Endothelial cell of umbilical vein (primary cell): ENCODE measurements at regions of chr2 and their contacts with region 1.

Region 1: DNA sequence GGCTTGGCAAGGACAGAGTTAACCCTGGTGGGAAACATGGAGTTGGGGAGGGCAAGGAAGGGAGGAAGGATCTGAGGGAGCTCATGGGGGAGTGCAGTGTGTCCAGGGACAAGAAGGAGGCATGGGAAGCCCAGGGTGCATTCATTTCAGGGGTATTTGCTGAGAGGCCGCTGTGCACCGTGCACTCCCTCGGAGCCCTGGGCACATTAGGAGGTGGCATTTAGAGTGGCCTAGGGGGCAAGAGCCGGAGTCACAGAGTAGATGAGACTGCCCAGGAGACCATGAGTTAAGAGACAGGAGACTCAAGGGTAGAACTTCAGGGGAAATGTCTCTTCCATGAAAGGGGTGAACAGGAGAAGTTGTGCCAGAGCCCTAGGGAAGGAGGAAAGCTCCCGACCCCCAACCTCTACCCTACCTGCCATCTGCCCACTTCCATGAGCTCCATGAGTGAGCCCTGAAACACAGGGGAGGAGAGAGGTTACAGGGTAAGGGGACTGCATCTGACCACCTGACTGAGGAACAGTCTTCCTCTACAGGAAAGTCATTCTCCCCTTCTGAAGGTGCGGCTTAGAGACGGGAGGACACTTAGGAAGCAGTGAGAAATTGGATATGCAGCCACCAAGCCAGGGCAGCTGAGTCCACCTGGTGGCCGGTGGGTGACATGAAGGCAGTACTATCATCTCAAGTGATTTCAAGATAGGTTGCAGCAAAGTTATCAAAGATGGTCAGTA is 58.5 kb upstream of the COPS8 start:
- DNase-seq: peak; percentile 86
- H3K4me3 ChIP-seq: no peak overlapping the region
- H3K27ac ChIP-seq: no peak overlapping the region
- H3K4me1 ChIP-seq: peaks cover 5% of the 10 kb centered on the region
- H3K27me3 ChIP-seq: no peaks in the 10 kb centered on the region
- CTCF ChIP-seq: peak; percentile 83 to 85
- POLR2A ChIP-seq: no peak

Region 2: GRCh38 chr2:236309669-236310029 is 717.5 kb before region 1 on chr2:
- CTCF ChIA-PET with region 1: interaction called, 3 read pairs
- POLR2A ChIA-PET with region 1: no interaction called
- dilution Hi-C with region 1: no loop called
- intact Hi-C with region 1: loop called (anchors 1 kb)
- DNase-seq: peak; percentile 39
- H3K4me3 ChIP-seq: no peak overlapping the region
- H3K27ac ChIP-seq: no peak overlapping the region
- H3K4me1 ChIP-seq: no peaks in the 10 kb centered on the region
- H3K27me3 ChIP-seq: no peaks in the 10 kb centered on the region
- CTCF ChIP-seq: peak; percentile 61 to 76
- POLR2A ChIP-seq: no peak

Region 3: GRCh38 chr2:236512902-236513435 is 514.2 kb before region 1 on chr2:
- CTCF ChIA-PET with region 1: interaction called, 24 read pairs
- POLR2A ChIA-PET with region 1: no interaction called
- dilution Hi-C with region 1: no loop called
- intact Hi-C with region 1: loop called (anchors 1 kb)
- DNase-seq: peak; percentile 42
- H3K4me3 ChIP-seq: no peak overlapping the region
- H3K27ac ChIP-seq: no peak overlapping the region
- H3K4me1 ChIP-seq: peaks cover 18% of the 10 kb centered on the region
- H3K27me3 ChIP-seq: no peaks in the 10 kb centered on the region
- CTCF ChIP-seq: peak; percentile 77 to 78
- POLR2A ChIP-seq: no peak

Region 4: DNA sequence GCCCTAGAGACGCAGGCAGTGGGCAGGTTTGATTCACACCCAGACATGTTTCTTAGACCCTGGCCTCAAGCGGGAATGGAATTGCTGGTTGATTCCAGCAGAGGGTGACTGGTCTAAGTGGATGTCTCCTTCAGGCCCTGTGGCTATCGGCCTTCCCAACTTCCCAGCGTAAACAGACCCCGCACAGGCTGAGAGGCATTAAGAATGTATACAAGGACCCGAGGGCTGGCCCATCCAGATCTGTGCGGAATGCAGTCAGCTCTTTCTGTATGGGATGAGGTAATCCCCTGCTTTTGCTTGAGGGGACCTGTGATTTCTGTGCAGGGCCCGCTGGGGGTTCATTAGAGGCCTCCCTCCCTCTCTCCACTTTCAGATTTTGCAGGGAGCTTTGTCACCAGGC is 451.1 kb before region 1 on chr2:
- CTCF ChIA-PET with region 1: interaction called, 5 read pairs
- POLR2A ChIA-PET with region 1: no interaction called
- dilution Hi-C with region 1: no loop called
- intact Hi-C with region 1: loop called (anchors 1 kb)
- DNase-seq: peak; percentile 77
- H3K4me3 ChIP-seq: no peak overlapping the region
- H3K27ac ChIP-seq: peak overlapping the region; percentile 9
- H3K4me1 ChIP-seq: peaks cover 59% of the 10 kb centered on the region
- H3K27me3 ChIP-seq: no peaks in the 10 kb centered on the region
- CTCF ChIP-seq: peak; percentile 11 to 48
- POLR2A ChIP-seq: no peak

Region 5: DNA sequence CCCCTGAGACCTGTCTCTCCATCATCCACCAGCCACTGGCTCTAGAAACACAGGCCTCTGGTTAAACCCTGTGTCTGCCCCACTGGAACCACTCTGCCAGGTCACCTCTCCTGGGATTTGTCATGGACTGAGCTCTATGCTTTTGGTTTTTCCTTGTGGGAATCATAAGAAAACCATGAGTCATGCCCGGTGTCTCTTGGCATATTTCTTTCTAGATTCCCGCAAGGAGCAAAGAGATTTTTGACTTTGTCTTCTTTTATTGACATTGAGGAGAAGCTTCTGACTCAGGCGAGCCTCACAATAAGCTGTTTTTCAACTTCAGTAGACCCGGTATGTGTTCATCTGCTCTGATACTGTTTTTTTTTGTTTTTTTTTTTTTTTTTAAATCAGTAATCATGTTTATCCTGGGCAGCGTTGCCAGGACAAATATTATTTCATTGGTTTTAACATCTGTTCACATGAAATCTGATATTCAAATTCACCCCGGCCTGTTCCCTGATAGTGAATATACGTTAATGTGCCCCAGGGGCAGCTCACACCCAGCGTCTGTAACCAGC is 250.4 kb before region 1 on chr2:
- CTCF ChIA-PET with region 1: no interaction called
- POLR2A ChIA-PET with region 1: no interaction called
- dilution Hi-C with region 1: no loop called
- intact Hi-C with region 1: loop called (anchors 1 kb)
- DNase-seq: peak; percentile 82
- H3K4me3 ChIP-seq: no peak overlapping the region
- H3K27ac ChIP-seq: peak overlapping the region; percentile 72
- H3K4me1 ChIP-seq: peaks cover 15% of the 10 kb centered on the region
- H3K27me3 ChIP-seq: no peaks in the 10 kb centered on the region
- CTCF ChIP-seq: no peak
- POLR2A ChIP-seq: no peak

Region 6: GRCh38 chr2:236803621-236804020 is 223.5 kb before region 1 on chr2:
- CTCF ChIA-PET with region 1: no interaction called
- POLR2A ChIA-PET with region 1: no interaction called
- dilution Hi-C with region 1: no loop called
- intact Hi-C with region 1: no loop called
- DNase-seq: no peak
- H3K4me3 ChIP-seq: no peak overlapping the region
- H3K27ac ChIP-seq: no peak overlapping the region
- H3K4me1 ChIP-seq: no peaks in the 10 kb centered on the region
- H3K27me3 ChIP-seq: no peaks in the 10 kb centered on the region
- CTCF ChIP-seq: no peak
- POLR2A ChIP-seq: no peak

Region 7: GRCh38 chr2:236833501-236834073 is 193.6 kb before region 1 on chr2:
- CTCF ChIA-PET with region 1: interaction called, 5 read pairs
- POLR2A ChIA-PET with region 1: interaction called, 3 read pairs
- dilution Hi-C with region 1: no loop called
- intact Hi-C with region 1: loop called (anchors 1 kb)
- DNase-seq: peak; percentile 95
- H3K4me3 ChIP-seq: no peak overlapping the region
- H3K27ac ChIP-seq: peak overlapping the region; percentile 94
- H3K4me1 ChIP-seq: peaks cover 23% of the 10 kb centered on the region
- H3K27me3 ChIP-seq: no peaks in the 10 kb centered on the region
- CTCF ChIP-seq: no peak
- POLR2A ChIP-seq: no peak

Region 8: DNA sequence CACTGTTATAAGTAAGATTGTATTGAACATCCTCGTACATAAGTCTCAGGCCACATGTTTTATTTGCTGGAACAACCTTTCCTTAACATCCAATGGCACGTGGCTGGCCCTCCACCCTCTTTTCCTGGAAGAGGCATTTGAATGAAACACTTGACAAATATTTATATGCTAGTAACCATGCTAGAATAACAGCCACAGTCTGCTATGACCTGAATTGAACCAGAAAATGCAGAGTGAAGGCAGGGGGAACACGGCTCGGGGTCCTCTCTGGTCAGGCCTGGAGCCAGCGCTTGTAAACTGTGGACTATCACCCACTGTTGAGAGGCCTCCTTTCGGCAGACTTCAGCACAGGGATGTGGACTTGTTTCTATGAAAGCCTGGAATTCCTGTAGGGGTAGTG is 139.6 kb before region 1 on chr2:
- CTCF ChIA-PET with region 1: interaction called, 3 read pairs
- POLR2A ChIA-PET with region 1: no interaction called
- dilution Hi-C with region 1: no loop called
- intact Hi-C with region 1: loop called (anchors 5 kb)
- DNase-seq: peak; percentile 90
- H3K4me3 ChIP-seq: no peak overlapping the region
- H3K27ac ChIP-seq: peak overlapping the region; percentile 98
- H3K4me1 ChIP-seq: peaks cover 35% of the 10 kb centered on the region
- H3K27me3 ChIP-seq: no peaks in the 10 kb centered on the region
- CTCF ChIP-seq: no peak
- POLR2A ChIP-seq: no peak